GM12878 (cell line): ENCODE measurements at regions of chr22 and their contacts with region 1.

Region 1: GRCh38 chr22:41697126-41697775 is 2.1 kb upstream of the MEI1 start:
- DNase-seq: peak; percentile 57
- ATAC-seq: peak; percentile 94
- H3K4me3 ChIP-seq: no peak overlapping the region
- H3K27ac ChIP-seq: peak overlapping the region; percentile 48; the same call in 1 of the 2 replicates
- H3K4me1 ChIP-seq: peaks cover 19% of the 10 kb centered on the region
- H3K27me3 ChIP-seq: no peaks in the 10 kb centered on the region
- CTCF ChIP-seq: peak; percentile 97 to 98 (median 98); a peak in 5 of 6 replicates
- EP300 ChIP-seq: no peak
- POLR2A ChIP-seq: no peak
- RAD21 ChIP-seq: peak; percentile 94

Region 2: DNA sequence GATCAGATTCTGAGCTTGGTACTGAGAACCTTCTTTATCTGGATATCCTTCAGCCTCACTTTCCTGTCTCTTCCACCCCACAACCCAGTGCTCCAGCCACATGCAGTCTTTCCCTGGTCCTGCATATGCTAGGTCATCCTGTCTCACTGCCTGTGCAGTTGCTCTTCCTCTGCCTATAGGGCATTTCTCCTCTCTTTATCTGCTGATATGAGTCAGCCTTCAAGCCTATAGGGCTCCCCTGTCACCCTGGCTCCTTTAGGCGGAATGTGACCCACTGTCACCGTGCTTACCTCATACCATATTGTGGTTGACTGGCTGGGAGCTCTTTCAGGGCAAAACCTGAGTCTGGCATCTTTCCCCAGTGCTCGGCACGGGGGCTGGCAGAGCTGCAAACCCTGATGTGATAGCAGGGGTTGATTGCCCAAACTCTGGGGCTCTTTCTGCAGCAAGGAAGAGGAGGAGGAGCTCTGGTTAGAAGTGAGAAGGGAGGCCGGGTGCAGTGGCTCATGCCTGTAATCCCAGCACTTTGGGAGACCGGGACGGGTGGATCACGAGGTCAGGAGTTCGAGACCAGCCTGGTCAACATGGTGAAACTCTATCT is 28.4 kb after region 1 on chr22:
- CTCF ChIA-PET with region 1: interaction called, 22 read pairs
- POLR2A ChIA-PET with region 1: no interaction called
- RAD21 ChIA-PET with region 1: interaction called, 5 read pairs
- SMC1A ChIA-PET with region 1: interaction called, 8 read pairs
- in situ Hi-C with region 1: no loop called
- intact Hi-C with region 1: no loop called
- DNase-seq: no peak
- ATAC-seq: peak; percentile 45; the same call in 2 of the 3 replicates
- H3K4me3 ChIP-seq: no peak overlapping the region
- H3K27ac ChIP-seq: no peak overlapping the region
- H3K4me1 ChIP-seq: no peaks in the 10 kb centered on the region
- H3K27me3 ChIP-seq: no peaks in the 10 kb centered on the region
- CTCF ChIP-seq: no peak
- EP300 ChIP-seq: no peak
- POLR2A ChIP-seq: no peak
- RAD21 ChIP-seq: no peak

Region 3: DNA sequence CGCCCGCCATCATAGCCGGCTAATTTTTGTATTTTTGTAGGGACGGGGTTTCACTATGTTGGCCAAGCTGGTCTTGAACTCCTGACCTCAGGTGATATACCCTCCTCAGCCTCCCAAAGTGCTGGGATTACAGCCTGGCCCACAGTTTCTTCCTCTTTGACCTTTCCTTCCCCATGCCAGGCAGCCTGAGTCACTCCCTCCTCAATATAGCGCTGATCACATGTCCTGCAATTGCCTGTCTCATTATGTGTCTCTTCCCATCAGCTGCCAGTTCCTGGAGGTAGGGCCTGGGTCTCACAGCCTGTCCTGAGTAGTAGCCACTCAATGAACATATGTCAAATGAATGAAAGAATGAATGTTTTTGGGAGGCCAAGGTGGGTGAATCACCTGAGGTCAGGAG is 60.3 kb after region 1 on chr22:
- CTCF ChIA-PET with region 1: interaction called, 69 read pairs
- POLR2A ChIA-PET with region 1: interaction called, 6 read pairs
- RAD21 ChIA-PET with region 1: interaction called, 36 read pairs
- SMC1A ChIA-PET with region 1: interaction called, 21 read pairs
- in situ Hi-C with region 1: no loop called
- intact Hi-C with region 1: no loop called
- DNase-seq: no peak
- ATAC-seq: no peak
- H3K4me3 ChIP-seq: no peak overlapping the region
- H3K27ac ChIP-seq: no peak overlapping the region
- H3K4me1 ChIP-seq: peaks cover 11% of the 10 kb centered on the region
- H3K27me3 ChIP-seq: no peaks in the 10 kb centered on the region
- CTCF ChIP-seq: no peak
- EP300 ChIP-seq: no peak
- POLR2A ChIP-seq: no peak
- RAD21 ChIP-seq: no peak

Region 4: GRCh38 chr22:41800348-41801146 is 103.3 kb after region 1 on chr22 and contains the start of gene CCDC134:
- CTCF ChIA-PET with region 1: interaction called, 63 read pairs
- POLR2A ChIA-PET with region 1: interaction called, 27 read pairs
- RAD21 ChIA-PET with region 1: interaction called, 50 read pairs
- SMC1A ChIA-PET with region 1: interaction called, 50 read pairs
- in situ Hi-C with region 1: no loop called
- intact Hi-C with region 1: loop called (anchors 5 kb)
- DNase-seq: peak; percentile 70
- ATAC-seq: peak; percentile 98
- H3K4me3 ChIP-seq: peak within 1 kb of the TSS; percentile 89
- H3K27ac ChIP-seq: peak within 1 kb of the TSS; percentile 82
- H3K4me1 ChIP-seq: peaks cover 19% of the 10 kb centered on the region
- H3K27me3 ChIP-seq: no peaks in the 10 kb centered on the region
- CTCF ChIP-seq: no peak
- EP300 ChIP-seq: no peak
- POLR2A ChIP-seq: peak; percentile 95
- RAD21 ChIP-seq: no peak
- polyA plus RNA-seq, gene CCDC134: 0.35 to 1.2 TPM

Region 5: GRCh38 chr22:41857155-41857859 is 160.1 kb after region 1 on chr22:
- CTCF ChIA-PET with region 1: interaction called, 46 read pairs
- POLR2A ChIA-PET with region 1: interaction called, 5 read pairs
- RAD21 ChIA-PET with region 1: interaction called, 24 read pairs
- SMC1A ChIA-PET with region 1: interaction called, 14 read pairs
- in situ Hi-C with region 1: no loop called
- intact Hi-C with region 1: loop called (anchors 5 kb)
- DNase-seq: peak; percentile 46
- ATAC-seq: peak; percentile 60
- H3K4me3 ChIP-seq: no peak overlapping the region
- H3K27ac ChIP-seq: no peak overlapping the region
- H3K4me1 ChIP-seq: peaks cover 47% of the 10 kb centered on the region
- H3K27me3 ChIP-seq: no peaks in the 10 kb centered on the region
- CTCF ChIP-seq: peak; percentile 54 to 76 (median 71)
- EP300 ChIP-seq: no peak
- POLR2A ChIP-seq: no peak
- RAD21 ChIP-seq: peak; percentile 64

Region 6: GRCh38 chr22:41946629-41947423 is 249.6 kb after region 1 on chr22 and contains the start of gene CENPM:
- CTCF ChIA-PET with region 1: interaction called, 75 read pairs
- POLR2A ChIA-PET with region 1: interaction called, 23 read pairs
- RAD21 ChIA-PET with region 1: interaction called, 58 read pairs
- SMC1A ChIA-PET with region 1: interaction called, 38 read pairs
- in situ Hi-C with region 1: loop called (anchors 5 kb)
- intact Hi-C with region 1: no loop called
- DNase-seq: peak; percentile 80
- ATAC-seq: peak; percentile 88
- H3K4me3 ChIP-seq: peak within 1 kb of the TSS; percentile 78
- H3K27ac ChIP-seq: peak within 1 kb of the TSS; percentile 94
- H3K4me1 ChIP-seq: peaks cover 59% of the 10 kb centered on the region
- H3K27me3 ChIP-seq: no peaks in the 10 kb centered on the region
- CTCF ChIP-seq: no peak
- EP300 ChIP-seq: no peak
- POLR2A ChIP-seq: peak; percentile 83
- RAD21 ChIP-seq: no peak
- polyA plus RNA-seq, gene CENPM: 36.7 to 62.3 TPM